ENCODE measurements at regions of chr3 and their contacts with region 1.

Region 1: GRCh38 chr3:28575746-28576613 is 227.4 kb upstream of the AZI2 start:
- DNase-seq: peak in 1 of 2 donors; percentile 66
- H3K4me3 ChIP-seq: peak overlapping the region; percentile 52 to 80
- H3K27ac ChIP-seq: peak overlapping the region; percentile 74 to 78
- H3K4me1 ChIP-seq: peaks cover 0 to 4% of the 10 kb centered on the region in 2 donors
- H3K27me3 ChIP-seq: no peaks in the 10 kb centered on the region
- CTCF ChIP-seq: no peak

Region 2: GRCh38 chr3:28667646-28668621 is 92.0 kb after region 1 on chr3:
- intact Hi-C with region 1: loop called (anchors 5 kb)
- DNase-seq: peak in 1 of 2 donors; percentile 76
- H3K4me3 ChIP-seq: no peak overlapping the region
- H3K27ac ChIP-seq: no peak overlapping the region
- H3K4me1 ChIP-seq: peaks cover 0 to 9% of the 10 kb centered on the region in 2 donors
- H3K27me3 ChIP-seq: no peaks in the 10 kb centered on the region
- CTCF ChIP-seq: peak; percentile 58 to 72 (median 71)